IMR-90 (cell line): ENCODE measurements at regions of chr7 and their contacts with region 1.

Region 1: DNA sequence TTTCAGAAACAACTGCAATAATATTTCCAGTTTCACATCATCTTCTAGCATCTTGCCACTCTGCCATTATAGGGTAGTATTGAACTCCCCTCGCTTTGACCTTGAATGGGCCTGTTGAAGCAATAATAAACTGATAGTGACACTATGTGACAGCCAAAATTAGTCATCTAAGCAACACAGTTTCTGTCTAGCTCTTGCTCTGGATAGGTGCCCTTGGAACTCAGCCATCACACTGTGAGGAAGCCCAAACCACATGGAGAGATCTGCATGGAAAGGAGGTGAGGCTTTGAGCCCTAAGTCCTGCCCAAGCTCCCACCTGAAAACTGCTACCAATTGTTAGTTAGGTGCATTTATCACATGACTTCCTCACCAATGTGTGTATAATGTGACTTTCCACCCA is 18.1 kb upstream of the KCND2 start:
- DNase-seq: no peak
- ATAC-seq: no peak
- H3K4me3 ChIP-seq: no peak overlapping the region
- H3K27ac ChIP-seq: no peak overlapping the region
- H3K4me1 ChIP-seq: no peaks in the 10 kb centered on the region
- H3K27me3 ChIP-seq: no peaks in the 10 kb centered on the region
- CTCF ChIP-seq: no peak
- POLR2A ChIP-seq: no peak
- RAD21 ChIP-seq: no peak

Region 2: DNA sequence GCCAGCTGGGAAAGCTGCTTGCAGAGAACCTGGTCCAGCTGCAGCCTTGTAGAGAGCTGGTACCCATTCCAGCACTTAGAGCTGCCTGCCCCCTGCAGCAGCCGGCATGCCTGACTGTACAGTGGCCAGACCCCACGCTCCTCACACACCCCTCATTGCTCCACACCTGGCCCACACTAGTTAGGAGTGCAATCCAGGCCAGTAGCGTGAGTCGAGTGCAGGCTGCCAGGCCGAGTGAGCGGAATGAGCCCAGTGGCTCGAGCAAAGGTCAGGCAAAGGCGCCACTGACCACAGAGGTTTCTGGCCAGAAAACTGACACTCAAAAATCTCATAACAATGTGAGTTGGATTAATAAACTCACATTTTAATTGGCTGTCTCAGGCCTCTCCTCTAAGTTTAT is 903.5 kb before region 1 on chr7:
- CTCF ChIA-PET with region 1: no interaction called
- POLR2A ChIA-PET with region 1: no interaction called
- dilution Hi-C with region 1: no loop called
- in situ Hi-C with region 1: no loop called
- intact Hi-C with region 1: loop called (anchors 2 kb)
- DNase-seq: no peak
- ATAC-seq: no peak
- H3K4me3 ChIP-seq: no peak overlapping the region
- H3K27ac ChIP-seq: no peak overlapping the region
- H3K4me1 ChIP-seq: no peaks in the 10 kb centered on the region
- H3K27me3 ChIP-seq: no peaks in the 10 kb centered on the region
- CTCF ChIP-seq: no peak
- POLR2A ChIP-seq: no peak
- RAD21 ChIP-seq: no peak

Region 3: GRCh38 chr7:120229084-120229483 is 25.8 kb before region 1 on chr7:
- CTCF ChIA-PET with region 1: no interaction called
- POLR2A ChIA-PET with region 1: no interaction called
- dilution Hi-C with region 1: no loop called
- in situ Hi-C with region 1: no loop called
- intact Hi-C with region 1: no loop called
- DNase-seq: no peak
- ATAC-seq: no peak
- H3K4me3 ChIP-seq: no peak overlapping the region
- H3K27ac ChIP-seq: no peak overlapping the region
- H3K4me1 ChIP-seq: no peaks in the 10 kb centered on the region
- H3K27me3 ChIP-seq: no peaks in the 10 kb centered on the region
- CTCF ChIP-seq: no peak
- POLR2A ChIP-seq: no peak
- RAD21 ChIP-seq: no peak